MCF 10A (cell line): ENCODE measurements at regions of chr7 and their contacts with region 1.

Region 1: DNA sequence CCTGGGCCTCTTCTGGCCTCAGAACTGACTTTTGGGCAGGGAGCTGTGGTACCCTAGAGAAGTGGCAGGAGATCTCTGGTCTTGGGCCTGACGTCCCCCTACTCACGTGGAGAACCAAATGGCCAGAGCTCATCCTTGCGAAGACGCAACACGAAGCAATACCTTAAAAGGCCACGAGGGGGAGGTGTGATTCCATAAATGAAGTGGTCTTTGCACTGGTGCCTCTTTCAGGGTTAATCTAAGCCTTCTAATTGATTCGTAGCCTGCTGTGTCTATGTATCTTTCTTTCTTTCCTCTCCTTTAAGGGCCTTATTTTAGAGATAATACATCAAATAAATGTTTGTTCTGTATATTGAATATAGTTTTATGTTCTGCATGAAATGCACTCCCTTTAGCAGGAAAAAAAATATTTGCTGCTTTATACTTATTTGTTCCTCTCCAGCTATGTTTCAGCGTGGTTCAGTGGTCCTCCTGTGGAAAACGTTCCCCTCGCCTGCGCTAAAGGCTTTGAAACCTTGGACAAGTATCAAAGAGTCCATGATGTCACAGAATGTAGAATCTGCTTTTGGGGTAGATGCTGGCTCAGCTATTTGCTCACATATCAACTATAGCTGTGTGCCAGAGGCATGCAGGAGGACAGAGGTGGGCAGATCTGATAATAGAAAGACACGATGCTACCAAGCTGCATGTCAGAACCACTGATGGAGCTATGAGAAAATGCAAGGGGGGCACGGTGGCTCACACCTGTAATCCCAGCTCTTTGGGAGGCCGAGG is 41.0 kb downstream of the STRA8 start:
- DNase-seq: peak; percentile 82
- H3K4me3 Mint-ChIP-seq: no peak overlapping the region
- H3K27ac Mint-ChIP-seq: no peak overlapping the region
- H3K4me1 Mint-ChIP-seq: no peaks in the 10 kb centered on the region
- H3K27me3 Mint-ChIP-seq: peaks cover 1% of the 10 kb centered on the region
- CTCF ChIP-seq: peak; percentile 85

Region 2: DNA sequence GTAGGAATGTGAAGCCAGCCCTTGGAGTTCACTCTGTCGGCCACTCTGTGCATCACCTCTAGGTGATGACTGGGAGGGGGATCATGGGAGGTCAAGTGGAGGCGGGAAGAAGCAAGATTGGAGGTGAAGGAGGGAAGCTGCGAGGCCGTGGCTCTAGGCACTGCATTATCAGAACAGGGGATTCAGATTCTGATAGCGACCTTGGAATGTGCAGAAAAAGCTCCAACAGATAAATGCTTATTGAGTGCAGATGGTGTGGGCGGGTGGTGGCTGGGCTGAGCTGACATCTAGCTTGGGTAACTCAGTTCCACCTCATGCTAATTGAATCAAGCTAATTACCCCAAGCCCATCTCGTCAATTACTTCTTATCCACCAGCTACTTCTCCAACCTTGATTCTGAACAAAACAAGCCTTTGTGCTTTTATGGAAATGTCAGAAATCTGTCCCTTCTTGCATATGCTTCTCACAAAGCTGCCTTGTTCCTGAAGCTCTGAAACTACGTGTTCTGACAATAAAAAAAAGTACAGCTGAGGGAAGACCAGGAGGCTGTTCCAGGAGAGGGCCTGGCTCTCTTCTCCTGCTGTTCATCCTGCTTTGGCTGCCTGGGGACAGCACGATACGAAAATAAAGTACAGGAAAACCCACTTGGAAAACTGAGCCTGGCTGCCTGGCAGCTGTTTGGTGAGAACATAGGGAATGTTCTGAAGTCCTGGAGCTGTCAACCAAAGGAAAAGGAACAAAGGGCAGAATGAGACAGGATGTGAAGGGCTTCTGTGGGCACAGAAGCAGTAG is 13.6 kb before region 1 on chr7:
- CTCF ChIA-PET with region 1: interaction called, 31 read pairs
- POLR2A ChIA-PET with region 1: no interaction called
- intact Hi-C with region 1: no loop called
- DNase-seq: no peak
- H3K4me3 Mint-ChIP-seq: no peak overlapping the region
- H3K27ac Mint-ChIP-seq: no peak overlapping the region
- H3K4me1 Mint-ChIP-seq: no peaks in the 10 kb centered on the region
- H3K27me3 Mint-ChIP-seq: no peaks in the 10 kb centered on the region
- CTCF ChIP-seq: no peak

Region 3: DNA sequence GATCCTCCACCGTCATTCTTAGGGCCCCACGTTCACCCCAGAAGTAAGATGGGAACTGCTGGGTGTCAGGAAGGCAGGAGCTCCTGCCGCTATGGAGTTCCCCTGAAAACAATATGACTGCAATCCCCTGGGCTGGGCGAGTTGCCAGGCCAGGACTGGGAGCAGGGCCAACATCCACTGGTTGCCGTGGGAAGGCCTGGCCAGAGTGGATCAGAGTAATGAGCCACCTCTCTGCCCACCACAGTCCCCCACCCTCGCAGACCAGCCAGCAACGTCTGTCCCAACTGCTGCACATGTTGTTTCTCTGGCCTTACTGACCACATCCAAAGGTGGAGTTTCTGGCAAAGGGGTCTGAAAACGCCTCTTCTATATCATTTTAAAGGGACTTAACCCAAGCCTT is 45.6 kb after region 1 on chr7:
- CTCF ChIA-PET with region 1: interaction called, 18 read pairs
- POLR2A ChIA-PET with region 1: interaction called, 6 read pairs
- intact Hi-C with region 1: no loop called
- DNase-seq: peak; percentile 92
- H3K4me3 Mint-ChIP-seq: no peak overlapping the region
- H3K27ac Mint-ChIP-seq: no peak overlapping the region
- H3K4me1 Mint-ChIP-seq: peaks cover 14% of the 10 kb centered on the region
- H3K27me3 Mint-ChIP-seq: no peaks in the 10 kb centered on the region
- CTCF ChIP-seq: no peak

Region 4: GRCh38 chr7:135558337-135558767 is 283.7 kb after region 1 on chr7:
- CTCF ChIA-PET with region 1: interaction called, 17 read pairs
- POLR2A ChIA-PET with region 1: interaction called, 6 read pairs
- intact Hi-C with region 1: no loop called
- DNase-seq: peak; percentile 85
- H3K4me3 Mint-ChIP-seq: no peak overlapping the region
- H3K27ac Mint-ChIP-seq: no peak overlapping the region
- H3K4me1 Mint-ChIP-seq: peaks cover 9% of the 10 kb centered on the region
- H3K27me3 Mint-ChIP-seq: no peaks in the 10 kb centered on the region
- CTCF ChIP-seq: peak; percentile 41

Region 5: DNA sequence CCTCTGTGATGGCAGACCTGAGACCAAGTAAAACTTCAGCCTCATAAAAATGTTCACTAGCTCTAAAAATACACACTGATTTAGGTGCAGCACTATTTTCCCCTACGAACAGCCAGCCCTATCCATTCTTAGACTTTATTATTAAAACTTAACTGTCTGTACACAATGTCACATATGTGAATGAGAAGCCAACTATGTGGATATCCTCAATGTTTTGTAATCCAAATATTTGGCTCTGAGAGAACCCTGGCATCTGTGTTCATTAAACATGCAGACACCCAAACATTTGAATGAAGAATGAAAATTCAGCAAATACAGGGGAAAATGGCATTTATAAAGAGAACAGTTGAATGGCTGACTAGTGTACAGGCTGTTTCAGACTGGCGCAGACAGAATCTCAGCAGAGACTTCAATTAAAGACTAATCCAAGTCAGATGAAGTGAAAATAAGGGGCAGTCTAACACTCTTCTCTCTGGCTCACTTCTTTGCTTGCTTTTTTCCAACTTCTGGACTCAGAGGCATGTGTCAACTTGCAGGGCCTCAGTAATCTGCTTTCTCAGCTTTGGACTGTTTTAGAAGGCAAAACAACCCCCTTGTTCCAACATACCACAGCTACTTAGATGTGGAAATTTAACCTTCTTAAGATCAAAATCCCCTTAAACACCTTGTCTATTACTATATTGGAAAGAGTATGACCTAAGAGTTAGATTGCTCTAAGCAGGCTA is 521.3 kb after region 1 on chr7:
- CTCF ChIA-PET with region 1: interaction called, 4 read pairs
- POLR2A ChIA-PET with region 1: no interaction called
- intact Hi-C with region 1: loop called (anchors 2 kb)
- DNase-seq: peak; percentile 6
- H3K4me3 Mint-ChIP-seq: no peak overlapping the region
- H3K27ac Mint-ChIP-seq: peak overlapping the region; percentile 31
- H3K4me1 Mint-ChIP-seq: peaks cover 14% of the 10 kb centered on the region
- H3K27me3 Mint-ChIP-seq: no peaks in the 10 kb centered on the region
- CTCF ChIP-seq: no peak